ENCODE measurements at regions of chr11 and their contacts with region 1.

Region 1: GRCh38 chr11:108568195-108568858 is 25.2 kb downstream of the EXPH5 start:
- DNase-seq: no peak
- H3K4me3 ChIP-seq: no peak overlapping the region
- H3K27ac ChIP-seq: no peak overlapping the region
- H3K4me1 ChIP-seq: no peaks in the 10 kb centered on the region
- H3K27me3 ChIP-seq: no peaks in the 10 kb centered on the region
- CTCF ChIP-seq: no peak

Region 2: GRCh38 chr11:108534274-108534882 is 33.9 kb before region 1 on chr11:
- intact Hi-C with region 1: loop called (anchors 5 kb)
- DNase-seq: no peak
- H3K4me3 ChIP-seq: no peak overlapping the region
- H3K27ac ChIP-seq: no peak overlapping the region
- H3K4me1 ChIP-seq: no peaks in the 10 kb centered on the region
- H3K27me3 ChIP-seq: no peaks in the 10 kb centered on the region
- CTCF ChIP-seq: no peak

Region 3: DNA sequence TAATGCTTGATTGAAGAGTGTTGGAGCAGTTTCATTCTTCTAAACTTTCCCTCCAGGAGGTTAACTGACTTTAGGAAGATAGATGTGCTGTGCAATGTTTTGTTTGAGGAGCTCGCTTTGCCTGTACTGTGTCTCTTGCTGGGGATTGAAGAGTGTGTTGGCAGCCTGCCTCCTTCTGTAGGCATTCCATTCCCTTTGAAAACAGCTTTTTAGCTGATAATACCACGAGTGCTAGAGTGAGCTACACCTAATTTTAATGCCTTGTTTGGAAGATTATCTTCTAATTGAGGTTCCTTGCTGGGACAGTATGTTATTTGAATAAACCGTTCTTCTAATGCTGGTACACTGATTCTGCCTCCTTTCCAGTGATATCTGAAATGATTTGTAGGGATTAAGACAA is 103.8 kb after region 1 on chr11:
- intact Hi-C with region 1: no loop called
- DNase-seq: no peak
- H3K4me3 ChIP-seq: no peak overlapping the region
- H3K27ac ChIP-seq: no peak overlapping the region
- H3K4me1 ChIP-seq: peaks cover 0 to 6% of the 10 kb centered on the region in 2 donors
- H3K27me3 ChIP-seq: no peaks in the 10 kb centered on the region
- CTCF ChIP-seq: no peak

Measured in ascending aorta (tissue), 2 donors.